ENCODE measurements at regions of chr9 and their contacts with region 1.

Region 1: GRCh38 chr9:126449725-126450667 is 123.4 kb downstream of the MVB12B start:
- DNase-seq: no peak
- ATAC-seq: no peak
- H3K4me3 ChIP-seq: no peak overlapping the region
- H3K4me3 Mint-ChIP-seq: no peak overlapping the region
- H3K27ac ChIP-seq: no peak overlapping the region
- H3K27ac Mint-ChIP-seq: peak overlapping the region; percentile 15
- H3K4me1 ChIP-seq: no peaks in the 10 kb centered on the region
- H3K4me1 Mint-ChIP-seq: no peaks in the 10 kb centered on the region
- H3K27me3 ChIP-seq: no peaks in the 10 kb centered on the region
- H3K27me3 Mint-ChIP-seq: no peaks in the 10 kb centered on the region
- CTCF ChIP-seq: no peak

Region 2: DNA sequence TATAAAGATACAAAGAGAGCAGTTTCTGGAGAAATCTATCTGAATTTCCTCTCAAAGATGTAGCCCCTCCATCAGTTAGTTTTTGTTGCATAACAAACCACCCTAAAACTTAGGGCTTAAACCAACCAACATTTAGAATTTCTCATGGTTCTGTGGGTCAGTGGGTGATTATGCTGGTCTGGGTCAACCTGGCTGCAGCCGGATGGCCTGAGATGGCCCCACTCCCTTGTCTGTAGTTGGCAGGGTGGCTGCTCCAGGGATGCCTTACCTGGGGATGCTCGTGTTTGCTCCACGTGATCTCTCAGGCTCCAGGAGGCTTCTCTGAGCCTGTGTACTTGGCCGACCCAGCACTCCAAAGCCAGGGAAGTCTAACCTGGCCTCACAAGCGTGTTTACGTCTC is 16.0 kb after region 1 on chr9:
- CTCF ChIA-PET with region 1: no interaction called
- POLR2A ChIA-PET with region 1: interaction called, 11 read pairs
- intact Hi-C with region 1: no loop called
- DNase-seq: no peak
- ATAC-seq: no peak
- H3K4me3 ChIP-seq: no peak overlapping the region
- H3K4me3 Mint-ChIP-seq: no peak overlapping the region
- H3K27ac ChIP-seq: no peak overlapping the region
- H3K27ac Mint-ChIP-seq: no peak overlapping the region
- H3K4me1 ChIP-seq: peaks cover 29 to 30% of the 10 kb centered on the region in 2 donors
- H3K4me1 Mint-ChIP-seq: peaks cover 31% of the 10 kb centered on the region
- H3K27me3 ChIP-seq: no peaks in the 10 kb centered on the region
- H3K27me3 Mint-ChIP-seq: no peaks in the 10 kb centered on the region
- CTCF ChIP-seq: no peak